ENCODE measurements at regions of chr7 and their contacts with region 1.

Region 1: GRCh38 chr7:125061776-125062397 is 132.3 kb upstream of the POT1 start:
- DNase-seq: no peak
- ATAC-seq: no peak
- H3K4me3 ChIP-seq: no peak overlapping the region
- H3K27ac ChIP-seq: no peak overlapping the region
- H3K4me1 ChIP-seq: peaks cover 6% of the 10 kb centered on the region; the same call in 1 of the 2 replicates
- H3K27me3 ChIP-seq: no peaks in the 10 kb centered on the region
- CTCF ChIP-seq: no peak
- EP300 ChIP-seq: no peak
- POLR2A ChIP-seq: no peak
- RAD21 ChIP-seq: no peak

Region 2: GRCh38 chr7:125030756-125031387 is 31.0 kb before region 1 on chr7:
- CTCF ChIA-PET with region 1: no interaction called
- POLR2A ChIA-PET with region 1: no interaction called
- in situ Hi-C with region 1: no loop called
- intact Hi-C with region 1: loop called (anchors 1 kb)
- DNase-seq: no peak
- ATAC-seq: peak; percentile 51; the same call in 2 of the 3 replicates
- H3K4me3 ChIP-seq: no peak overlapping the region
- H3K27ac ChIP-seq: no peak overlapping the region
- H3K4me1 ChIP-seq: no peaks in the 10 kb centered on the region
- H3K27me3 ChIP-seq: no peaks in the 10 kb centered on the region
- CTCF ChIP-seq: no peak
- EP300 ChIP-seq: no peak
- POLR2A ChIP-seq: no peak
- RAD21 ChIP-seq: no peak

Region 3: DNA sequence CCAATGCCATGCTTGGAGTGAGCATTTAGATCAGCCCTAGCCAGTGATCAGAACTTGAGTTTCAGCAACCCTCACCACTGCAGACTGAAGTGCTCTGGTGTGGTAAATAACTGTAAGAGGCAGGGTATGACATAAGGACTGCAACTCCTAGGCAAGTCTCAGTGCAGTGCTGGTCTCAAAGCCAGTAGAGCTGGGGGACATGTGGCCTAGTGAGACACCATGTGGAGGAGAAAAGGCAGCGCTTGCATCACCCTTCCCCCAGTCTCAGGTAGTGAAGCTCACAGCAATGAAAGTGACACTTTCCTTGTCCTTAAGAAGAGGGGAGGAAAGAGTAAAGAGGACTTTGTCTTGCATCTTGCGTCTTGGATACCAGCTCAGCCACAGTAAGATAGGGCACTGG is 254.6 kb after region 1 on chr7:
- CTCF ChIA-PET with region 1: no interaction called
- POLR2A ChIA-PET with region 1: no interaction called
- in situ Hi-C with region 1: no loop called
- intact Hi-C with region 1: loop called (anchors 2 kb)
- DNase-seq: peak; percentile 8
- ATAC-seq: peak; percentile 66
- H3K4me3 ChIP-seq: no peak overlapping the region
- H3K27ac ChIP-seq: no peak overlapping the region
- H3K4me1 ChIP-seq: no peaks in the 10 kb centered on the region
- H3K27me3 ChIP-seq: no peaks in the 10 kb centered on the region
- CTCF ChIP-seq: 0 out of 2 replicates have a peak, but pooled peaks have one; percentile 22
- EP300 ChIP-seq: no peak
- POLR2A ChIP-seq: no peak
- RAD21 ChIP-seq: no peak

Region 4: DNA sequence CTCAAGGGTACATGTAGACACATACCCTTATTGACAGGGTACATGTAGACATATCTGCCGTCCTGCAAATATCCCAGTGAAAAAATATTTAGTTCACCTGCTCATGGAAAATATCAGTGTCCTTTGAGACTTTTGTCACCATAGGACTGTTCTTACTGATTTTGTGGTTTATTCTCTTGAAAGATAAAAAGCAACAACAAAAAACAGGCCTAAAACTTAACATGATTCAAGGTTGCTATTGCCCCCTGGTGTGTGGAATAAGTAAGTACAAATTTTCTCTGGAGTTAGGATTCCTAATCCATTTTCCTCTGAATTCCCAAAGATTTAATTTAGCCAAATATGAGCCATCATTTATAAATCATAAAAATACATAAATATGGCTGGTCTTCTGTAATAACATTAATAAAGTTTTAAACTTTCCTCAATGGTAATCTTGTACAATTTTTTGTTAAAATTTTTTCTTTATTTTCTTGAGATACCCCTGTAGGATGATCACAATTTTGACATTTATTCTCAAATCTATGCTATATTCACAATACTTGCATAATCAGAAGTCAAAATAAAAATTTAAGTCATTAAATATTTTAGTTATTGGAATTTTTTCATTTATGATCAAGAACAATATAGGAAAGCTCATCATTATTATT is 609.2 kb after region 1 on chr7:
- CTCF ChIA-PET with region 1: interaction called, 9 read pairs
- POLR2A ChIA-PET with region 1: no interaction called
- in situ Hi-C with region 1: loop called (anchors 5 kb)
- intact Hi-C with region 1: loop called (anchors 1 kb)
- DNase-seq: peak; percentile 9
- ATAC-seq: no peak
- H3K4me3 ChIP-seq: no peak overlapping the region
- H3K27ac ChIP-seq: no peak overlapping the region
- H3K4me1 ChIP-seq: no peaks in the 10 kb centered on the region
- H3K27me3 ChIP-seq: no peaks in the 10 kb centered on the region; a peak in 1 of 5 replicates
- CTCF ChIP-seq: peak; percentile 40
- EP300 ChIP-seq: no peak
- POLR2A ChIP-seq: no peak
- RAD21 ChIP-seq: no peak

Measured in HepG2 (cell line).